ENCODE measurements at regions of chr17 and their contacts with region 1.

Region 1: DNA sequence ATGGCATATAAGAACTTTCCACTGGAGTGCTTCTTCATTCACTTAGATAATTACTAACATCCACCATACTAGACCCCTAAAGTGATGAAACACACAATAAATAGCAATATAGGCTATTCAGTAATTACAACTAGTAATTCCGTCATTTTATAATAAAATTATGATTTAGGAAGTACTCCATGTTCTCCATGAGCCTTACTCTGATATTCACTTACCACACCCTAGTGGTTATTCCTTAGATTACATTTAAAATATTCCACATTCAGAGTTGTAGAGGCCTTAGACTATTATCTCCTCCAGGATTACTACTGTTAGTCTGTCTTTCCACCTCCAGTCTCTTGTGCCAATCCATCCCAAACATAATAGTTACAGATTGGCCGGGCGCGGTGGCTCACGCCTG is 62.4 kb downstream of the STH start:
- DNase-seq: no peak
- ATAC-seq: no peak
- H3K4me3 ChIP-seq: no peak overlapping the region
- H3K27ac ChIP-seq: no peak overlapping the region
- H3K4me1 ChIP-seq: peaks cover 0 to 32% (median 12%) of the 10 kb centered on the region in 9 donors
- H3K27me3 ChIP-seq: no peaks in the 10 kb centered on the region
- CTCF ChIP-seq: peak in 7 of 9 donors; percentile 8 to 49 (median 38)

Region 2: DNA sequence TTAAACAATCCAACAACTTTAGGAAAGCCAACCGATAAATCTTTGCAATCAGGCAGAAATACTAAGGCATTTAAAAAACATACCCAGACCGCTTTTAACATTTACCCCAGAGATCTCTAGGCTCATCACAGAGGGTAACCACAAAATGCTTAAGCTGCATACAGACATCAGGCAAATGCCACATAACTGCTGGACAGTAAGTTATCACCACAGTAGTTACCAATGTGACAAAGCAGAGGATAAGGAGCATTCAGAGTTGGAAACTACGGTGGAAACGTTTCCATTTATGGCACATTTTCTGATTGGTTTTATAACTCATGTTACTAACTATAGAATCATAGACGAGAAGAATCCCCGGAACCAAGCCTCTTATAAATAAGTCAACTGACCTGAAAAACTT is 54.3 kb after region 1 on chr17:
- intact Hi-C with region 1: loop called in 1 of 10 experiments (anchors 10 kb)
- DNase-seq: peak in 1 of 2 donors; percentile 16
- ATAC-seq: peak; percentile 47 to 90 (median 80)
- H3K4me3 ChIP-seq: peak overlapping the region in 2 of 10 donors; percentile 1 to 8
- H3K27ac ChIP-seq: peak overlapping the region; percentile 3 to 87 (median 74)
- H3K4me1 ChIP-seq: peaks cover 4 to 88% (median 58%) of the 10 kb centered on the region in 9 donors
- H3K27me3 ChIP-seq: no peaks in the 10 kb centered on the region
- CTCF ChIP-seq: no peak